ENCODE measurements at regions of chr10 and their contacts with region 1.

Region 1: DNA sequence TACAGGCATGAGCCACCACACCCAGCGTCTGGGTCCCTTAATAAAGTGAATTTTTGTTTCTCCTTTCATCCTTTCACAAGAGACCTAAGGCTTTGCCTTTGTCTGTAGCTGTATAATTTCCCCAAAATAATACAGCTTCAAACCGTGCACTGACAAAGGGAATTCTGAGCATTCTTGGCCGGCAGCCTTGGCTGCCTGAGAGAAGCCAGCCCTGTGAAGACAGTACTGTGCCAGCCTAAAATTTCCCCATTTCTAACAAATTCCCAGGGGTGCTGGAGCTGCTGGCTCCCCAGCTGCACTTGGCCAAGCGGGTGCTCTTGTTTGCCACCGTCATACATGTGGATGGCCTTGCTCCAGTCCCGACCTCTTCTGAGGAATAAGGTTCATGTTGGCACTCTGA is 106.2 kb downstream of the ZMYND11 start:
- DNase-seq: no peak
- H3K4me3 ChIP-seq: no peak overlapping the region
- H3K27ac ChIP-seq: no peak overlapping the region
- H3K4me1 ChIP-seq: no peaks in the 10 kb centered on the region; a peak in 1 of 4 replicates
- H3K27me3 ChIP-seq: no peaks in the 10 kb centered on the region
- CTCF ChIP-seq: no peak
- EP300 ChIP-seq: no peak
- RAD21 ChIP-seq: no peak

Region 2: GRCh38 chr10:230737-231136 is 10.7 kb before region 1 on chr10:
- CTCF ChIA-PET with region 1: interaction called, 10 read pairs
- POLR2A ChIA-PET with region 1: no interaction called
- DNase-seq: peak; percentile 33
- H3K4me3 ChIP-seq: no peak overlapping the region
- H3K27ac ChIP-seq: no peak overlapping the region
- H3K4me1 ChIP-seq: peaks cover 0 to 9% of the 10 kb centered on the region in 2 experiments; a peak in 2 of 4 replicates
- H3K27me3 ChIP-seq: no peaks in the 10 kb centered on the region
- CTCF ChIP-seq: peak; percentile 60
- EP300 ChIP-seq: no peak
- RAD21 ChIP-seq: peak; percentile 31; the same call in 1 of the 2 replicates